Motor neuron (in vitro differentiated cells): ENCODE measurements at regions of chr17 and their contacts with region 1.

Region 1: DNA sequence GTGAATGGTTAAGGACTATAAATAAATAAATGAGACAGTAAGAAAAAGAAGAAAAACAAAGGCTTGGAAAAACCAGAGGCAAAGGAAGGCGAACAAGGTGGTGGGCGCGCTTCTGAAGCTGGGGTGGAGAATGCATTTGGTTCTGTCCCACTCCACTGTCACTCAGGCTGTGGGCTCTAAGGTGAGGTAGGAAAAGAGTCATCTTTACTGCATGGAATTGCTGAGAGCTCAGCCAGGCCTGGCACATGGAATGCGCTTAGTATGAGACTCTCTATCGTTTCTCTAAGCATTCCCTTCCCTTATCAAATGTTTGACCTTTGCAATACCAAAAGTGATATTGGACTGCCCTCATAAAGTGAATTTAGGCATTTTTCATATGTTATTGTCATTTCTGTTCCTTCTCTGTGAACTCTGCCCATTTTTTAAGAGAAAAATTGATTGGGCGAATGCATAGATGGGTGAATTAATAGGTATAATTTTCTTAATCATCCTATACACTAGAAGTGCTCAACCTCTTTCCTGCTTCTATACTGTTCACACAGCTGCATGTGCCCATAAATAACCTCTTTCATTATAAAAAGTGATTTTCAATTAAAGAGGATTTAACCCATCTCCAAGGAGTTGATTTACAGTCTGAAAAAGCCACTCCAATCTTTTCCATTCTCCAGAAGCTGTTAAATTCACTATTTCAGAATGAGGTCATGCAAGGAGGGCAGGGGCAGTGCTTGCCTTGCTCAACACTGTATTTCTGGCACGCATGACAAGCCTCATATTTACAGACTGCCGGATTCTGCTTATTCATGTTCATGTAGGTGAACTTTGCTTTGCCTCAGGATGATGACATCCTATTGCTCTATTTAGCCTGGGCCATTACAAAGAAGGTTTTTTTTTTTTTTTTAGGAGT is 87.7 kb downstream of the MYH10 start:
- ATAC-seq: peak; percentile 58 to 100 (median 98)
- H3K4me3 ChIP-seq: no peak overlapping the region
- H3K27ac ChIP-seq: peak overlapping the region in 1 of 2 donors; percentile 88
- H3K4me1 ChIP-seq: peaks cover 0 to 19% of the 10 kb centered on the region in 2 donors

Region 2: GRCh38 chr17:8753976-8754440 is 211.2 kb after region 1 on chr17:
- in situ Hi-C with region 1: loop called in 1 of 9 experiments (anchors 25 kb)
- ATAC-seq: peak in 3 of 8 experiments; percentile 31 to 76 (median 46)
- H3K4me3 ChIP-seq: no peak overlapping the region
- H3K27ac ChIP-seq: no peak overlapping the region
- H3K4me1 ChIP-seq: no peaks in the 10 kb centered on the region